ENCODE measurements at regions of chr11 and their contacts with region 1.

Region 1: GRCh38 chr11:65425105-65425970 is 2.7 kb downstream of the NEAT1 start:
- DNase-seq: peak in 3 of 5 donors; percentile 40 to 66 (median 66)
- H3K4me3 ChIP-seq: peak overlapping the region; percentile 59 to 99 (median 98)
- H3K27ac ChIP-seq: peak overlapping the region; percentile 99 to 100
- H3K4me1 ChIP-seq: peaks cover 0 to 29% (median 14%) of the 10 kb centered on the region in 3 donors
- H3K27me3 ChIP-seq: no peaks in the 10 kb centered on the region
- CTCF ChIP-seq: no peak

Region 2: DNA sequence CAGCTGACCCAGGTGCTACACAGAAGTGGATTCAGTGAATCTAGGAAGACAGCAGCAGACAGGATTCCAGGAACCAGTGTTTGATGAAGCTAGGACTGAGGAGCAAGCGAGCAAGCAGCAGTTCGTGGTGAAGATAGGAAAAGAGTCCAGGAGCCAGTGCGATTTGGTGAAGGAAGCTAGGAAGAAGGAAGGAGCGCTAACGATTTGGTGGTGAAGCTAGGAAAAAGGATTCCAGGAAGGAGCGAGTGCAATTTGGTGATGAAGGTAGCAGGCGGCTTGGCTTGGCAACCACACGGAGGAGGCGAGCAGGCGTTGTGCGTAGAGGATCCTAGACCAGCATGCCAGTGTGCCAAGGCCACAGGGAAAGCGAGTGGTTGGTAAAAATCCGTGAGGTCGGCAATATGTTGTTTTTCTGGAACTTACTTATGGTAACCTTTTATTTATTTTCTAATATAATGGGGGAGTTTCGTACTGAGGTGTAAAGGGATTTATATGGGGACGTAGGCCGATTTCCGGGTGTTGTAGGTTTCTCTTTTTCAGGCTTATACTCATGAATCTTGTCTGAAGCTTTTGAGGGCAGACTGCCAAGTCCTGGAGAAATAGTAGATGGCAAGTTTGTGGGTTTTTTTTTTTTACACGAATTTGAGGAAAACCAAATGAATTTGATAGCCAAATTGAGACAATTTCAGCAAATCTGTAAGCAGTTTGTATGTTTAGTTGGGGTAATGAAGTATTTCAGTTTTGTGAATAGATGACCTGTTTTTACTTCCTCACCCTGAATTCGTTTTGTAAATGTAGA is 75.2 kb after region 1 on chr11:
- intact Hi-C with region 1: loop called (anchors 5 kb)
- DNase-seq: peak in 2 of 5 donors; percentile 68 to 73
- H3K4me3 ChIP-seq: peak overlapping the region; percentile 81 to 97 (median 93)
- H3K27ac ChIP-seq: peak overlapping the region; percentile 99
- H3K4me1 ChIP-seq: peaks cover 0 to 16% (median 13%) of the 10 kb centered on the region in 3 donors
- H3K27me3 ChIP-seq: no peaks in the 10 kb centered on the region
- CTCF ChIP-seq: no peak

Region 3: GRCh38 chr11:65588199-65589054 is 163.1 kb after region 1 on chr11:
- intact Hi-C with region 1: no loop called
- DNase-seq: peak in 2 of 5 donors; percentile 51 to 84
- H3K4me3 ChIP-seq: no peak overlapping the region
- H3K27ac ChIP-seq: no peak overlapping the region
- H3K4me1 ChIP-seq: peaks cover 0 to 10% (median 0%) of the 10 kb centered on the region in 3 donors
- H3K27me3 ChIP-seq: no peaks in the 10 kb centered on the region
- CTCF ChIP-seq: peak; percentile 50

Measured in kidney (tissue), 22 donors.